Psoas muscle (tissue), 8 donors: ENCODE measurements at regions of chr17 and their contacts with region 1.

Region 1: GRCh38 chr17:34637548-34638525 is 58.5 kb downstream of the TMEM132E start:
- DNase-seq: peak; percentile 71 to 84
- ATAC-seq: peak; percentile 89 to 97 (median 92)
- H3K4me3 ChIP-seq: peak overlapping the region; percentile 62
- H3K27ac ChIP-seq: no peak overlapping the region
- H3K4me1 ChIP-seq: no peaks in the 10 kb centered on the region
- H3K27me3 ChIP-seq: peaks cover 0 to 52% (median 2%) of the 10 kb centered on the region in 3 donors
- CTCF ChIP-seq: peak; percentile 82

Region 2: DNA sequence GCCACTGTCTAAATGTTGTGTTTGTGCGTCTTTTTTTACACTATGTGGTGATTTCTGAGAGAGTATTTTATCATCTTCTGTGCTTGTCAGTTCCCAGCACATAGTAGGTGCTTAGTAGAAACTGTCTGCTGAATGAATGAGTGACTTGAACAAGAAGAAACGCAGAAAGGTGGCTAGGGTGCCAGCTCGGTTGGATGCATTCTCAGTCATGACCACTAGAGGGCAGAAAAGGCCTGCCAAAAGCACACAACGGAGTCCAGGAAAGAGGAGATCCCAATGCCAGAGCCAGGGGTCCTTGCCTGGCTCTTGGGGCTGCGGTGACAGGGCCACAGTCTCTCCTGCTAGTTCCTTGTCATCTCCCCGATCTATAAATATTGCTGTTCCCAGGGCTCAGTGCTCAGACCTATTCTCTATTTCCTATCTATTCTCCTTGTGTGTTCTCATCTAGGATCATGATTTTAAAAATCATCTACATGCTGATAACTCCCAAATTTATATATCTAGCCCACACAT is 217.5 kb before region 1 on chr17:
- intact Hi-C with region 1: loop called (anchors 1 to 5 kb)
- DNase-seq: peak in 1 of 2 donors; percentile 24
- ATAC-seq: peak in 3 of 4 donors; percentile 61 to 76 (median 70)
- H3K4me3 ChIP-seq: no peak overlapping the region
- H3K27ac ChIP-seq: no peak overlapping the region
- H3K4me1 ChIP-seq: no peaks in the 10 kb centered on the region
- H3K27me3 ChIP-seq: peaks cover 3 to 31% (median 7%) of the 10 kb centered on the region in 3 donors
- CTCF ChIP-seq: peak; percentile 99

Region 3: DNA sequence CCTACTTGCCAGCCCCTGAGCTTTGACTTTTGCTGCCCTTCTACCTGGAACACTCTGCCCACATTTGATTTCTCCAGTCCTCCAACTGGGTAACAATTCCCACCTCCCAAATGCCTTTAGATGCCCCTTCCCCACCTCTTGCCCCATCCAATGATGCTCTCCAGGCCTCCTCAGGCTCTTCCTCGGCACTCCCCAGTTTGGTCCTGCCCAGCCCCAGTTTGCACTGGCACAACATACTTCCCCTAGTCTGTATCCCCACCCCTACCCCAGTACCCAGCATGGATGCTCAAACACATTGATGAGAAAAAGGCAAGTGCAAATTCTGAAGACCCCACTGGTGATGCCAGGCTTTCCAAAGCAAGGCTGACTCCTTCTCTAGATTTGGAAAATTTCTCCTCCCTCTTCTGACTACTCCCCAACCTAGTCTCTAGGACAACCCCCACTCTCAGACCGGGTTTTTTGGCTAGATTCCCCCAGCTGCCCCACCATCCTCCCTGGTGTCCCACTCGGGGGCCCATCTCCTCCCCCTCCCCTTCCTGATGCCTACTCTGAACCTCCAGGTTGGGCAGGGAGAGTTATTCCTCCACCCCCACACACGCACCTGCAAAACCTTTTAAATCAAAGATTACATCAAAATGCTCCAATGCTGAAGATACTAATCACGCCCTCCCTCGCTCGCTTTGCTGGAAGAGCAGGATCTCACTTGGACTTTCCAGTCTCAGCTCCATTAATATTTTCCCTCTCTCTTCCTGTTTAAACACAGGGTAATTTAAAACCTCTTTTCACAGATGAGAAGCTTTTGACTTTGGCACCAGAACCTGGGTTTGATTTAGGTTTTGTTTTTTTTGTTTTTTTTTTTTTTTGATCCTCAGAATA is 36.4 kb after region 1 on chr17:
- intact Hi-C with region 1: no loop called
- DNase-seq: no peak
- ATAC-seq: no peak
- H3K4me3 ChIP-seq: no peak overlapping the region
- H3K27ac ChIP-seq: no peak overlapping the region
- H3K4me1 ChIP-seq: no peaks in the 10 kb centered on the region
- H3K27me3 ChIP-seq: peaks cover 0 to 3% (median 3%) of the 10 kb centered on the region in 3 donors
- CTCF ChIP-seq: no peak